ENCODE measurements at regions of chr10 and their contacts with region 1.

Region 1: GRCh38 chr10:116687633-116688032 is 54.7 kb downstream of the HSPA12A start:
- DNase-seq: no peak
- H3K4me3 ChIP-seq: no peak overlapping the region
- H3K27ac ChIP-seq: no peak overlapping the region
- H3K4me1 ChIP-seq: no peaks in the 10 kb centered on the region
- H3K27me3 ChIP-seq: no peaks in the 10 kb centered on the region
- CTCF ChIP-seq: no peak

Region 2: DNA sequence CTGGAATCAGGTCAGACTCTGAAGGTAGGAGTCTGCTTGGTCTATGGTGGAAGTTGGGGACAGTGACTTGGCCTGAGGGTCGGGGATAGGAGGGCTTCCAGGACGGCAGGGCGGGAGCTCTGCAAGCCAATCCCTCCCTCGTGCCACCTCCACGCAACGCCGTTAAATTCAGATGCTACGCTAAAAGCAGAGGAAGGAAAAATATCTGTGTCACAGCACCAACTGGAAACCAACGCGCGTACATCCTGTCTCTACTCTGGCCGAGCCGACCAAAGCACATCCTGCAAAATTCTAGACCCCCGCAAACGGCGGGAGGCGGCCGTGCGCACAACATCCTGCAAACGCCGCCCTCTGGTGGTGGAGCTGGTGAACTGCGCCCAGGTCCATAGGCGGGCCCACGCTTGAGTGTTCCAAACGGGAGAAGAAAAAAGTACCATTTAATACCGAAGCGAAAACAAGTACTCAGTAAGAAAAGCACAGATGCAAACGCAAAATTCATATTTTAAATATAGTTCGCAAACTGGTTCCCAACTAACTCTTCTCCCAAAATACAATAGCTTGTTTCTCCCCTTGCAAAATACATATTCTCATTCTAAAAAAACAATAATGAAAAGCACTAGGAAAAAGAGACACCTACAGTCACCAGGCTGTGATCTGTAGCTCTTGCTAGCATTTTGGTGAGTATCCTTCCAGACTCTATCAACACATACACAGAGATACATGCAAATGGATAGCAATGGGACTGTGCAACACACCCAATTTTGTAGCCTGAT is 100.4 kb after region 1 on chr10:
- CTCF ChIA-PET with region 1: interaction called, 13 read pairs
- POLR2A ChIA-PET with region 1: no interaction called
- intact Hi-C with region 1: loop called (anchors 1 kb)
- DNase-seq: peak; percentile 87
- H3K4me3 ChIP-seq: no peak overlapping the region
- H3K27ac ChIP-seq: no peak overlapping the region
- H3K4me1 ChIP-seq: peaks cover 5% of the 10 kb centered on the region
- H3K27me3 ChIP-seq: no peaks in the 10 kb centered on the region
- CTCF ChIP-seq: peak; percentile 99

Region 3: DNA sequence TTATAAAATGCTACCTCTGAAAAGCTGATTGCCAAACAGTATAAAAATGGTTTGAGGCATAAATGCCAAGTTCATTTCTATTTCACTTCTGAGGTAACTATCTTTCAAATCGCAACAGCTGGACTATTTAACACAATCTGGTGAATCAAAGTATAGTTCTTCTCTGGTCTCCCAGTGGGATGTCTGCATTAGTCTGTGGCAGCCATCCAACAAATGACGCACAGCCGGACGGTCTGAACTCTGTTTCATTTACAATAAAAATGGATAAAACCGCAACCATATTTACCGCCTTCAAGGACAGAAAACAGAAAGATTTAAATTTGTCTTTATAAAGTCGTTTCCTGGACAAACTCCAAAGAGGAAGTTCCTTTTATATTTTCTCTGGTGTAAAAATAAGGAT is 203.6 kb after region 1 on chr10:
- CTCF ChIA-PET with region 1: no interaction called
- POLR2A ChIA-PET with region 1: no interaction called
- intact Hi-C with region 1: no loop called
- DNase-seq: peak; percentile 97
- H3K4me3 ChIP-seq: no peak overlapping the region
- H3K27ac ChIP-seq: peak overlapping the region; percentile 46
- H3K4me1 ChIP-seq: peaks cover 63% of the 10 kb centered on the region
- H3K27me3 ChIP-seq: no peaks in the 10 kb centered on the region
- CTCF ChIP-seq: no peak

Measured in A673 (cell line).